Calu3 (cell line): ENCODE measurements at regions of chr6 and their contacts with region 1.

Region 1: DNA sequence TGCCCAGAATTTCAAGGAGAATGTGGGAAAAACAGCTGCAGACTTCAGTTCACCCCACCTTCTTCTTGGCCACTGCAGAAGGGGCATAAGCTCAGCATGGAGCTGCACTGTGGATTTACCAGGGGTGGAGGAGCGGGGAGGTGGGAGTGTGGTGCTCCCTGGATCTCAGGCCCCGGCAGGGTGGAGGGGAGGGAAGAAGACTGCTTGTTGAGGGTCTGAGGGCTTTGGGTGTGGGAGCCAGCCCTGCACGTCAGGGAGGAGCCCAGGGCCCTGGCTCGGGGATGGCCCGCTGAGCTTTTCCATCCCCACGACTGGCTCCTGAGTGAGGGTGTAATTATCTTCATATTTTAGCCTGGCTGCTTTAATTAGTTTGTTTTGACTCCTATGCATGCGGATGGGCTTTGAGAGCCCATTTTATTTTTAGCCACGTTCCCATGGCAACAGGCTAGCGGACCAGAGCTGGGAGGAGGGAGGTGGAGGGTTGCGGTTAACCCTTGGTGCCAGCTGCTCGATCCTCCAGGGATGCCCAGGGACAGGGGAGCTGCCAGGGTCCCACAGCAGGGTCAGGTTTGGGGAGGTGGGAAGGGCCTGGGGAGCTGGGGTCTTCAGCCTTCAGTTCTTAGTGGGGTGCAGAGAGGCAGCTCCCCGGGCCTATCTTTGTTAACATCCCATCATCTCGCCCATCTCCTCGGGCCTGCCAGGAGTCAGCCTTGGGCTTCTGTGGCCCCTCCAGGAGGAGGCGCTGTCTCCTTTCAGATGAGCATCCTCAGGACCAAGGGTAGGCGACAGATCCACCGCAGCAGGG is 68.2 kb downstream of the RAB44 start:
- DNase-seq: peak; percentile 92
- H3K4me3 Mint-ChIP-seq: no peak overlapping the region
- H3K27ac Mint-ChIP-seq: no peak overlapping the region
- H3K4me1 Mint-ChIP-seq: peaks cover 24% of the 10 kb centered on the region
- H3K27me3 Mint-ChIP-seq: no peaks in the 10 kb centered on the region
- CTCF ChIP-seq: peak; percentile 95

Region 2: DNA sequence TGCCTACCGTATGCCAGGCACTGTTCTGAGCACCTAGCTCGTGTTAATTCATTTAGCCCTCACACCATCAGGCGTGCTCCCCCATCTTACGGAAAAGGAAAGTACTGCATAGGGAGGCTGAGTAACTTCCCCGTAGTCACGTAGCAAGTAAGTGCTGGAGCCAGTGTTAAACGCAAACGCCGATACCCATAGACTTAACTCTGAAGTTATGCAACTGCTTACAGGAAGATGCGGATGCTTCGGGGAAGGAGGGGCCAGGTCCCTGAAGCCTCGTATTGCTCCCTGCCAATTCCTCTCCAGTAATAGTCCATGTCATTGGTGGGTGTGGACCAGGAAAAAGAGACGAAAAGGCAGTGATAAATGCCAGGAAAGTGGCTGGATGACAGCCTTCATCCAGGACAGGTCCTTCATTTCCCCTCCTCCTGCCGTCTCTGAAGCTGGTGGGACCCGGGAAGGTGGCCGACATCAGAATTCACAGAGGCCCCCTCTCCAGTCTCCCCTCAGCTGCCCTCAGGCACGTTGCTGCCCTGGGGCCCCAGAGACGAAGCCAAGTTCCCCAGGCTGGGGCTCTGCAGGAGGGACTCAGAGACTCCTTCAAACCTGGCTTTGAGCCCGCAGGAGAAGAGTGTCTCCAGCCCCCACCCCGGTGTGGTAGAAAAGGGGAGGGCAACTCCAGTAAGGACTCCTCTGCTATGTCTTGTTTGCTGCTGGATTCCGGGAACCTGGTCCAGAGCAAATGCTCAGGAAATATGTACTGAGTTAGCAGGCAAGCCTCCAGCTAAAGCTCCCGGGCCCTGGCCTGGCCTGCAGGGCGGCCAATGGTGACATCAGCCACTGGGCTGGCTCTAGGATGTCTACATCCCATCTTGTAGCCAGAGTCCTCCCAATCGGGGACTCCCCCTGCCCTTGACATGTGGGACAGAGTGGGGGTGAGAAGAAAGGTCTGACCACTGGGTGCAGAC is 30.4 kb before region 1 on chr6:
- CTCF ChIA-PET with region 1: no interaction called
- intact Hi-C with region 1: no loop called
- DNase-seq: no peak
- H3K4me3 Mint-ChIP-seq: no peak overlapping the region
- H3K27ac Mint-ChIP-seq: no peak overlapping the region
- H3K4me1 Mint-ChIP-seq: peaks cover 15% of the 10 kb centered on the region
- H3K27me3 Mint-ChIP-seq: peaks cover 26% of the 10 kb centered on the region
- CTCF ChIP-seq: no peak

Region 3: DNA sequence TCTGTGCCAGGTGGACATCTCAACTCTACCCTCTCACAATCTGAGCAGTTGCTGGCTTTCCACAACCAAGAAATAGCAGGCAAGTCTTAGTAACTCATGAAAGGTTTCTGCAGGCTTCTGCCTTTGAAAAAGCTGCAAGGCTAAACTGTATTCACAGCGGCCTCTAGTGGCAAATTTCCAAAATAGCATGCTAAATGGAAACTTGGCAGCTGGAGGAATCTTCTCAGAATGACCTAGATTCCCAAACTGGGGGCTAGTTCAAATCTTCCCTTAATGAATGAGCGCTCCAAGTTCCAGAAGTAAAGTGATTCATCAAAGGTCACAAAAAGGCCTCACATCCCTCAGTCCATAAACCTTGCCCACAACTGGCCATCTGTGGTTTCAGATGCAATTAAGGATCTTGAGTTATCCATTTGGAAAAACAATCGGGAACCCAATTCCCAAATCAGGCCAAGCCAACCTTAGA is 85.4 kb after region 1 on chr6:
- CTCF ChIA-PET with region 1: interaction called, 15 read pairs
- intact Hi-C with region 1: loop called (anchors 1 kb)
- DNase-seq: peak; percentile 49
- H3K4me3 Mint-ChIP-seq: no peak overlapping the region
- H3K27ac Mint-ChIP-seq: no peak overlapping the region
- H3K4me1 Mint-ChIP-seq: peaks cover 41% of the 10 kb centered on the region
- H3K27me3 Mint-ChIP-seq: peaks cover 3% of the 10 kb centered on the region
- CTCF ChIP-seq: peak; percentile 46

Region 4: DNA sequence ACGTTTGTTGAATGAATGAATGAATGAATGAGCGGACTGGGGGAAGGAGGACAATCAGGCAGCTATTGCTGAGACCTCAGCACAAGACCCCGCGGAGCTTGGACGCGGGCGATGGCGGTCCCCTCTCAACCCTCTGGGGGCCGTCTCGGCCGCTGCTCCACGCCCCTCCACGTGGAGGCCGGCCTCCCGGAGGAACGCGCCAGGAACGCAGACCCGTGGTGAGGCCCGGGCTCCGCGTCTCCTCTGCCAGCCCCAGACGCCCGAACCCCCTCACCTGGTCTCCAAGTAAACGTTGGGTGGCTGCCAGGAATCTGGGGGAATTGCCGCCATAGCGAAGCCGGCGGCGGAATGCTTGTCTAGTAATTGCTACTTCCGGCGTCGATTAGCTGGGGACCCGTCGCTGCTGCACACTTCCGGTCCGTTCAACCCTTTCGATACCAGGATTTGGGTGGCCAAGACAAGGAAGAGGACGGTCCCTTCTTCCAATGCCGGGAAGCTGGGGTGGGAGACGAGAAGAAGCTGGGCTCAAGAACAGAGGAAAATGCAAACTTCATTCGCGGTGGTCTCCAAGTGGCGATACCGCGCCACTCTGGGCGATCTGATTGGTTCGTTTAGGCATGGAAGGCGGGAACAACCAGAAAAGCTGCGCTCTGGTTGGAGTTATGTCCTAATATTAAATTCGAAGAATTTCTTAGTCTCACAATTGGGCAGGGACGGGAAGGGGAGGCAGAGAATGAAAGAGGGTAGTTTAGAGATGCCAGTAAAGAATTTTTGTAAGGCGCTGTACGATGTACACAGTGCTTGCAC is 108.8 kb after region 1 on chr6 and contains the start of gene PPIL1:
- CTCF ChIA-PET with region 1: interaction called, 16 read pairs
- intact Hi-C with region 1: loop called (anchors 5 kb)
- DNase-seq: peak; percentile 88
- H3K4me3 Mint-ChIP-seq: peak within 1 kb of the TSS; percentile 91
- H3K27ac Mint-ChIP-seq: peak within 1 kb of the TSS; percentile 99
- H3K4me1 Mint-ChIP-seq: peaks cover 27% of the 10 kb centered on the region
- H3K27me3 Mint-ChIP-seq: no peaks in the 10 kb centered on the region
- CTCF ChIP-seq: no peak
- total RNA-seq, gene PPIL1: 59.6 and 64.4 TPM in 2 replicates

Region 5: GRCh38 chr6:37110500-37111461 is 345.0 kb after region 1 on chr6:
- CTCF ChIA-PET with region 1: no interaction called
- intact Hi-C with region 1: no loop called
- DNase-seq: no peak
- H3K4me3 Mint-ChIP-seq: no peak overlapping the region
- H3K27ac Mint-ChIP-seq: no peak overlapping the region
- H3K4me1 Mint-ChIP-seq: peaks cover 3% of the 10 kb centered on the region
- H3K27me3 Mint-ChIP-seq: no peaks in the 10 kb centered on the region
- CTCF ChIP-seq: no peak